ENCODE measurements at regions of chr2 and their contacts with region 1.

Region 1: DNA sequence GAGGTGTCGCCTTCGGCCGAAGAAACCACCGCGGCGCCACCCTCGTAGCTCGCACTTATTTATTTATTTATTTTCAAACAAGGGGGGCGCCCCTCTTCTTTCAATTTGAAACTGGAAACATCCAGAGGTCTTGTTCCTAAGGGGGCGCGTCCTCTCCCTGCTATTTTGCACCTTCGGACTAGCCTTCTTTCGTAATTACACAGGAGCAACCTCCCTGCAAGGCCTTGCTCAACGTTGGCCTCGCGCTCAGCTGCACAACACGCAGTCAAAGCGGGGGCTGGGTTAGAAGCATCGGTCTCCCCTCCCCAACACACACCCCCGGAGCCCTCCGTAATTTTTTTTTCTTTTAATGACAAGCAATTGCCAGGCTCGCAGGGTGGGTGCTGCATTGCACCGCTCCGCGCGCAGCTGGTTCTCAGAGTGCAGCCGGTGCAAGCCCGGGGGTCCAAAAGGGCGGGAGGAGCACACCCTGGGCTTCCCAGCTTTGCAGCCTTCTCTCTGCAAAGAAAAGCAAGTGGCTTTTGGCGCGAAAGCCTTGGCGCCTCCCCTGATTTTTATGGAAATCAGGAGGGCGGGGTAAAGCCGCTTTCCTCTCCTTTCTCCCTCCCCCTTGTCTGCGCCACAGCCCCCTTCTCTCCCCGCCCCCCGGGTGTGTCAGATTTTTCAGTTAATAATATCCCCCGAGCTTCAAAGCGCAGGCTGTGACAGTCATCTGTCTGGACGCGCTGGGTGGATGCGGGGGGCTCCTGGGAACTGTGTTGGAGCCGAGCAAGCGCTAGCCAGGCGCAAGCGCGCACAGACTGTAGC is at the start of gene MYCN:
- DNase-seq: peak; percentile 76
- H3K4me3 ChIP-seq: peak within 1 kb of the TSS in 1 of 3 experiments; percentile 12
- H3K27ac ChIP-seq: no peak within 1 kb of the TSS
- H3K4me1 ChIP-seq: no peaks in the 10 kb centered on the region
- H3K27me3 ChIP-seq: peaks cover 29% of the 10 kb centered on the region
- CTCF ChIP-seq: peak in 1 of 2 donors; percentile 68
- total RNA-seq, gene MYCN: 0.50 TPM in 1 of 2 donors, not detected in the other

Region 2: GRCh38 chr2:16281451-16282336 is 341.6 kb after region 1 on chr2:
- CTCF ChIA-PET with region 1: no interaction called
- dilution Hi-C with region 1: no loop called
- in situ Hi-C with region 1: no loop called
- intact Hi-C with region 1: loop called (anchors 1 kb)
- DNase-seq: peak; percentile 32
- H3K4me3 ChIP-seq: no peak overlapping the region
- H3K27ac ChIP-seq: no peak overlapping the region
- H3K4me1 ChIP-seq: no peaks in the 10 kb centered on the region
- H3K27me3 ChIP-seq: no peaks in the 10 kb centered on the region
- CTCF ChIP-seq: peak in 1 of 2 donors; percentile 13

Region 3: DNA sequence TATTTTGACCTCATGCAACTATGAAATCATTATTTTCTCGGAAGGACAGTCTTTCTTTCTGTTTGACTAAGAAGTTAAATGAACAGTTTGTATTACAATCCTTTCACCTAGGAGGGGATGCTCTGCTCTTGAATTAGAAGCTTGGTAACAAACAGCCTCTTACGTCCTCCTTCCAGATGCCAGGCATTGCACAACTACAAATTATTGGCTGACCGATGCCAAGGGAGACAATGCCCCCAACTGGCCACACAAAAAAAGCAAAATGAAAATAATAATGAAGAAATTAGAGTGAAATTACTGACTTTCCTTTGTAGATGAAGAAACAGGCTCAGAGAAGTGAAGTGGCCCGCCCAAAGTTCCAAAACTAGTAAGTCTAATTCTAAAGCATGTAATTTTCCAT is 547.6 kb after region 1 on chr2:
- CTCF ChIA-PET with region 1: no interaction called
- dilution Hi-C with region 1: no loop called
- in situ Hi-C with region 1: no loop called
- intact Hi-C with region 1: loop called (anchors 1 kb)
- DNase-seq: peak; percentile 21
- H3K4me3 ChIP-seq: no peak overlapping the region
- H3K27ac ChIP-seq: no peak overlapping the region
- H3K4me1 ChIP-seq: no peaks in the 10 kb centered on the region
- H3K27me3 ChIP-seq: peaks cover 2% of the 10 kb centered on the region
- CTCF ChIP-seq: peak; percentile 17 to 52

Region 4: GRCh38 chr2:16507655-16508489 is 567.8 kb after region 1 on chr2:
- CTCF ChIA-PET with region 1: no interaction called
- dilution Hi-C with region 1: no loop called
- in situ Hi-C with region 1: no loop called
- intact Hi-C with region 1: loop called (anchors 2 kb)
- DNase-seq: peak; percentile 3
- H3K4me3 ChIP-seq: no peak overlapping the region
- H3K27ac ChIP-seq: no peak overlapping the region
- H3K4me1 ChIP-seq: no peaks in the 10 kb centered on the region
- H3K27me3 ChIP-seq: peaks cover 7% of the 10 kb centered on the region
- CTCF ChIP-seq: peak; percentile 13 to 58

Region 5: DNA sequence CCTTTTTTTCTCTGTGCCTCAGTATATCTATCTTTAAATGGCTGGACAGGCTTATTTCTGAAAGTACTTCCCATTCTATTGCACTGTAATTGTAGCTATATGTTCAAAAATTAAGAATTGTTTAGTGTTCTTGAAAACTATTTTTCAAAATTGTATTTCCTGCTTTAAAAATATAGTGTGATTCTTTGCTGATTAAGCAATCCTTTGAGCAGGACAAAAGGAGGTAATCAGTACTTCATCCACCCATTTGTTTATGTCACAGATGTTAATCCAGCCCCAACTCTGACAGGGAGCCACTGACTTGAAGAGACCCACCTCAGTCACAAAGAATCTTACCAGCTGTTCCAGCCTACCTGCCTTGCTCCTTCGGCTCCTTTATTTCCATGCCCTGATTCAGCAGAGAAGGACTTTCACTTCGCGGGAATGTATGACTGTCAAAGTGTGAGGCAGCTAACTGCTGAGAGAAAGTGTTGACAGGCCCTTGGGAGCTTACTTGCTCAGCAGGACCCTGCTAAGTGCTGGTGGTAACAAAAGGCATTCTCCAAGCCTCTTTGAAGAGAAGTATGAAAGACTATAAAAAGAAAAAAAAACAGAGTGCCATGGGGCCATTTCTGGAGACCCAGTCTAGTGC is 1118.8 kb after region 1 on chr2:
- CTCF ChIA-PET with region 1: no interaction called
- dilution Hi-C with region 1: no loop called
- in situ Hi-C with region 1: no loop called
- intact Hi-C with region 1: no loop called
- DNase-seq: no peak
- H3K4me3 ChIP-seq: no peak overlapping the region
- H3K27ac ChIP-seq: no peak overlapping the region
- H3K4me1 ChIP-seq: no peaks in the 10 kb centered on the region
- H3K27me3 ChIP-seq: no peaks in the 10 kb centered on the region
- CTCF ChIP-seq: no peak

Region 6: DNA sequence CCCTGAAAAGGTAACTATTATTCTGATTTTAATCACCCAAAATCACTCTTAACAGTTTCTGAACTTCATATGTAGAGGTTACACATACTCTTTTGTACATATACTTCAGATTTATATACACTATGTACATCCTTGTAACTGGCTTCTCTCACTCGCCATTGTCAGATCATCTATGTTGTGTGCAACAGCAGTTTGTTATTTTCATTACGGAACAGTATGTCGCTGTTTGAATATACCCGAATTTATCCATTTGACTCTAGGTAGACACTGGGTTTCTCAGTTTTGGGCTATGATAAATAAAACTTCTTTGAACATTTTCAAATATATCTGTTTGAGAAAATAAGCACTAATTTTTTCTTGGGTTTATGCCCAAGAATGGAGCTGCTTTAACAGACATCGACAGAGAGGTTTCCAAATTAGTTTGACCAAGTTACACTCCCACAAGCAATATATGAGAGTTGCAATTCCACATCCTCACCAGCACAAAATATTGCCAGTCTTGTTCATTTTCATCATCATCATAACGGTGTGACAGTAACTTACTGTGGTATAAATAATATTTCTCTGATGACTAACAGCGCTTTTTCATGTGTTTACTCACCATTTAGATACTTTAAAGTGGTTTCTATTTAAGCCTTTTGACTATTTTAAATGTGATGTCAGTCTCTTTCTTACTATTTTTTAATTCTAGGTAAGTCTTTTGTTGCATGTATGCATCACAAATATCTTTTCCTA is 1732.7 kb after region 1 on chr2:
- CTCF ChIA-PET with region 1: no interaction called
- dilution Hi-C with region 1: no loop called
- in situ Hi-C with region 1: no loop called
- intact Hi-C with region 1: loop called (anchors 10 kb)
- DNase-seq: peak; percentile 80
- H3K4me3 ChIP-seq: no peak overlapping the region
- H3K27ac ChIP-seq: peak overlapping the region; percentile 60
- H3K4me1 ChIP-seq: no peaks in the 10 kb centered on the region
- H3K27me3 ChIP-seq: no peaks in the 10 kb centered on the region
- CTCF ChIP-seq: peak in 1 of 2 donors; percentile 15